CD8-positive, alpha-beta memory T cell (primary cell): ENCODE measurements at regions of chr12 and their contacts with region 1.

Region 1: DNA sequence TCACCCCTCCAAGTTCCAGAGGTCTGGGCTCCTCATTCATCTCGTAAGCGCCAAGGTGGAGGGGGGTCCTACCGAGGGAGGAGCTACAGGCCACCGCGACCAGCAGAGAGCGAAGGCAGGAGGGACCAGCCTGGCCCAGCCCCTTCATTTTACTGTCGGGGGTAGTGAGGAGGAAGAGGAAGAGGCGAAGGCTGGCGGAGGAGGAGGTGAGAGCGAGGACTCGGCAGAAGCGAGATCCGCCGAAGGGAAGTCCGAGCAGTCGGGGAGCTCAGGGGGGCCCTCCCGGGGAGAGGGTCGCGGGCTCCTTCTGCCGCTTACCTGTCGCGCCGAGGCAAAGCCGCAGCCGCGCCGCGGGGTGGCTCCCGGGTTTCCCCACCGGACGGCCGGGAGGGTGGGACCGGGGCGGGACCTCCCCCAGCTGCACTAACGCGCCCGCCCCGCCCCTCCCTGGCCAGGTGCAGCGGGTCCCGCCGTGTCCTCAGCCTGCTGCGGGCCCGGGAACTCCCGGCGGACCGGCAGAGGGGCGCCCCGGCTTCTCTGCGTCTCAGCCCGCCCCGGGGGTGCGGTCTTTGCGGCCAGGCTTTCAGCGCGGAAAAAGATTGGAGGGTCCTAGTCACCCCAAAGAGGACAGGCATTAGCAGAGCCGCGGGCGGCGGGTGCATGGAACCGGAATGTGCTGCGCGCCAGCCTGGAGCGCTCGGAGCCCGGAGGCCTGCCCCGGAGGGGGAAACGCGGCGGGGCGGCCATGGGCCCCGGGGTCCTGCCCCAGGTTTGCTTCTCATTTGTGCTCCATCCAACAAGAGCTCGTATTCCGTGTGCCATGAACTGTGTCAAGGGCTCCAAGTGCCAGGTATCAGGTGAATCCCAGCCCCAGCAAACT is at the start of gene GALNT6:
- DNase-seq: peak; percentile 69 to 80 (median 71)
- H3K4me3 ChIP-seq: peak within 1 kb of the TSS; percentile 72
- H3K4me3 Mint-ChIP-seq: peak within 1 kb of the TSS; percentile 86 to 98 (median 92)
- H3K27ac ChIP-seq: peak within 1 kb of the TSS; percentile 53
- H3K27ac Mint-ChIP-seq: peak within 1 kb of the TSS; percentile 76 to 98 (median 87)
- H3K4me1 ChIP-seq: peaks cover 71% of the 10 kb centered on the region
- H3K4me1 Mint-ChIP-seq: peaks cover 65 to 87% (median 68%) of the 10 kb centered on the region in 3 donors
- H3K27me3 ChIP-seq: no peaks in the 10 kb centered on the region
- H3K27me3 Mint-ChIP-seq: no peaks in the 10 kb centered on the region
- total RNA-seq, gene GALNT6: 13.5 to 15.6 TPM

Region 2: DNA sequence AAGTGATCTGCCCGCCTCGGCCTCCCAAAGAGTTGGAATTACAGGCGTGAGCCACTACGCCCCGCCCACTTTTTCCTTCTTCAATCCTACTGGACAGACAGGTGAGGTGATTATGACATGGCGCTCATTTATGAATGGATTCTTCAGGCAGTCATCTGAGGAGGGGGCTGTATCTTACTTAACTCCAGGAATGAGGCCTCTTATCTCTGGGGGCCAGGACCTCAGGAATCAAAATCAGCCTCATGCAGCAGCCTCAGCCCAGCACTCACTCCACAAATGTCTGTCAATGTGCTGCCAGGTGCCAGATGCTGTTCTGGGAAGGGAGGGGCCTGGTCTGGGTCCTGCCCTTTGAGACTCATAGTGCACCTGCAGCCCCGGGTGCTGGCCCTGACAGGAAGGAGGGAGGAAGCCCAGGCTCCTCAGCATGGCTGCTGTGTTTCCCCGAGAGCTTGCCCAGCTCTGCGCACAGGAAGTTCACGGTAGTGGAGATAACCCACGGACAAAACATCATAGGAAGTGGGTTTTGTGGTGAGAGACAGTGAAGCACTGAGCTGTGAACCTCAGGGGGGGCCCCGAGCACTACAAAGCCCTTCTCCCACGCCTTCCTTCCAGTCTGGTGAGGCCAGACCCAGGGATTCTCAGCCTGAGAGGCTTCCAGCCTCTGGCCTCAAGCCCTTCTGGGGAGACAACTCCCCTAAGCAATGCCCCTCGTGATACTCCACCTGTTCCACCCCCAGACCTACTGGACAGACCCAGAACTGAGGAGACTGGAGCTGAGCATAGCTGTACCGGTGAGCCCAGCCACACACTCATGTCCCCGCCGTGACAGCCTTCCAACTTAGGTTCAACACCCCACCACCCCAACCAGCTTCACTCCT is 22.6 kb before region 1 on chr12:
- CTCF ChIA-PET with region 1: interaction called, 7 read pairs
- POLR2A ChIA-PET with region 1: interaction called, 31 read pairs
- DNase-seq: peak; percentile 79 to 96 (median 94)
- H3K4me3 ChIP-seq: peak overlapping the region; percentile 62
- H3K4me3 Mint-ChIP-seq: peak overlapping the region; percentile 62 to 85 (median 79)
- H3K27ac ChIP-seq: peak overlapping the region; percentile 4
- H3K27ac Mint-ChIP-seq: peak overlapping the region; percentile 40 to 100 (median 96)
- H3K4me1 ChIP-seq: peaks cover 32% of the 10 kb centered on the region
- H3K4me1 Mint-ChIP-seq: peaks cover 29 to 56% (median 42%) of the 10 kb centered on the region in 3 donors
- H3K27me3 ChIP-seq: no peaks in the 10 kb centered on the region
- H3K27me3 Mint-ChIP-seq: peaks cover 0 to 3% of the 10 kb centered on the region in 2 donors

Region 3: DNA sequence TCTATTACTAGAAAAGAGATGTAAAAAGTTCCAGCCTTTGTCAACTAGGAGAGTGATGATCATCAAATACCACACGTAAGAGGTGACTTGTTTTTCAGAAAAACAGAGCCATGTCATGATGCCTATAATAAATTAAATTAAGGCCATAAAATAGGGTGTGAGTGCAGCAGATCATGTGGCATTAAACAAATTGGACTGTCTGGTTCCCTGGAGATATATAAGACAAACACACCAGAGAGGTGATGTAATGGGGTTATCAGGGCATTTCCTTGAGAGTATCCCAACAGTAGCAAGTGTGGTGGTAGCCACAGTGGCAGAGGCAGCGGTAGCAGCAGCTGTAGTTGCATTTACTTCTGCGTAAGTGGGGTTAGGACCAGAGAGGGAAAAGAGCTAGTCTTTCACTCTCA is 14.3 kb after region 1 on chr12:
- CTCF ChIA-PET with region 1: no interaction called
- POLR2A ChIA-PET with region 1: no interaction called
- DNase-seq: no peak
- H3K4me3 ChIP-seq: no peak overlapping the region
- H3K4me3 Mint-ChIP-seq: no peak overlapping the region
- H3K27ac ChIP-seq: no peak overlapping the region
- H3K27ac Mint-ChIP-seq: peak overlapping the region in 1 of 8 donors; percentile 1
- H3K4me1 ChIP-seq: no peaks in the 10 kb centered on the region
- H3K4me1 Mint-ChIP-seq: no peaks in the 10 kb centered on the region
- H3K27me3 ChIP-seq: no peaks in the 10 kb centered on the region
- H3K27me3 Mint-ChIP-seq: no peaks in the 10 kb centered on the region